Posterior vena cava (tissue), 2 donors: ENCODE measurements at regions of chr9 and their contacts with region 1.

Region 1: DNA sequence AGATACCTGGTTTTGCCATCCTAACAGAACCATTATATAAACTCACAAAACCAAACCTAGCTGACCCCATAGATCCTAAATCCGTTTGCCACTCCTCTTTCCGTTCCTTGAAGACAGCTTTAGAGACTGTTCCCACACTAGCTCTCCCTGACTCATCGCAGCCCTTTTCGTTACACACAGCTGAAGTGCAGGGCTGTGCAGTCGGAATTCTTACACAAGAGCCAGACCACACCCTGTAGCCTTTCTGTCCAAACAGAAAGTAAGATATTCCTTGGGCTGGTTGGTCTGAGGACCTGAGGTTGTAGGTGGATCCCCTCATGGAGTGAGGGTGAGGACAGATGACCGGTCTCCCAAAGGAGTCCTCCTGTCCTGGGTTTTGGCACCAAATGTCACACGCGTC is 56.7 kb upstream of the NAA35 start:
- DNase-seq: no peak

Region 2: DNA sequence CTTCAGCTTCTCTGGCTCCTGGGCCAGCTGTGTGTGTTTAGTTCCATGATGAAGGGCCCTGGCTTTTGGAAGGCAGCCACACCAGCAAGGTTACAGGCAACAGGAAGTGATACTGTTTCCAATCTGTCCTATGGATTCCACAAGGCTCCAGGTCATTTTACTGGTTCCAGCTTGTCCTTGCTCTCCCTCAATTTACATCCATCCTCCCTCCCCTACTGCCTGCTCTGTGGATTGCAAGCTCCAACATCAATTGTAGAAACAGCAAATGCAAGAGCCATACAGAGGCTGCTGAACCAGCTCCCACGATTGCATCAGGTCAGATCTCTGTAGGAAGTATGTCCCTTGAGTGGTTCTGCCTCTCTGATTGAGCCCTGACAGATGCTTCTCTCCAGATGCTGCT is 804.9 kb before region 1 on chr9:
- intact Hi-C with region 1: loop called in 1 of 2 experiments (anchors 5 kb)
- DNase-seq: no peak